ENCODE measurements at regions of chr17 and their contacts with region 1.

Region 1: DNA sequence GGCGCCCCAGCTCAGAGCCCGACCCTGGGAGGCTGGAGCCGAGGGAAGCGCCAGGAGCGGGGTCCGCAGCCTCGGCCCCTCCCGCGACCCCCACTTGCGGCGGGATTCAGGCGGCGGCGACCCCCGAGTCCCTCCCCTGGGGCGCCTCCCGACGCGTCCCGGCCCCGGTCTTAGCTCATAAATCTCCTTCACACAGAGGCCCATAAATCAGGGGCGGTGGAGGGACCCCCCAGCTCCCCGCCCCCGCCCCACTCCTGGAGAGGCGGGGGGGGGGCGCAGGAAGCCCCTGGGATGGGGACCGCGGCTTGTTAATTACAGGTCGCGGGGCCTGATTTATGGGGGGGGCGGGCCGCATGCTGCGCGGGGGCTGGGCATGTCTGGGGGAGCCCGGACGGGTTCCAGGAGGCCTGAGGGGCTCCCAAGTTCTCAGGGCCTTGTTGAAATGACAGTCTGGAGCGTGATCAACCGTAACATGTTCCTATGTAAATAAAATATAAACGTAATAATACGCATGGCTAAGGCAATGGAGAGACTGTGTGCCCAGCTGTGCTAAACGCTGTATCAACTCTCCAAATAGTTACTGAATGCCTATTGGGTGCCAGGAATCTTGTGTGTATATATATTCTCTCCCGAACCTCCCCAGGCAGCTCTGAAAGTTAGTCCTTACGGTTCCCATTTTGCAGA is 10.0 kb upstream of the BHLHA9 start:
- DNase-seq: no peak
- H3K4me3 ChIP-seq: peak overlapping the region; percentile 62
- H3K27ac ChIP-seq: no peak overlapping the region
- H3K4me1 ChIP-seq: peaks cover 3% of the 10 kb centered on the region
- H3K27me3 ChIP-seq: no peaks in the 10 kb centered on the region
- CTCF ChIP-seq: no peak

Region 2: DNA sequence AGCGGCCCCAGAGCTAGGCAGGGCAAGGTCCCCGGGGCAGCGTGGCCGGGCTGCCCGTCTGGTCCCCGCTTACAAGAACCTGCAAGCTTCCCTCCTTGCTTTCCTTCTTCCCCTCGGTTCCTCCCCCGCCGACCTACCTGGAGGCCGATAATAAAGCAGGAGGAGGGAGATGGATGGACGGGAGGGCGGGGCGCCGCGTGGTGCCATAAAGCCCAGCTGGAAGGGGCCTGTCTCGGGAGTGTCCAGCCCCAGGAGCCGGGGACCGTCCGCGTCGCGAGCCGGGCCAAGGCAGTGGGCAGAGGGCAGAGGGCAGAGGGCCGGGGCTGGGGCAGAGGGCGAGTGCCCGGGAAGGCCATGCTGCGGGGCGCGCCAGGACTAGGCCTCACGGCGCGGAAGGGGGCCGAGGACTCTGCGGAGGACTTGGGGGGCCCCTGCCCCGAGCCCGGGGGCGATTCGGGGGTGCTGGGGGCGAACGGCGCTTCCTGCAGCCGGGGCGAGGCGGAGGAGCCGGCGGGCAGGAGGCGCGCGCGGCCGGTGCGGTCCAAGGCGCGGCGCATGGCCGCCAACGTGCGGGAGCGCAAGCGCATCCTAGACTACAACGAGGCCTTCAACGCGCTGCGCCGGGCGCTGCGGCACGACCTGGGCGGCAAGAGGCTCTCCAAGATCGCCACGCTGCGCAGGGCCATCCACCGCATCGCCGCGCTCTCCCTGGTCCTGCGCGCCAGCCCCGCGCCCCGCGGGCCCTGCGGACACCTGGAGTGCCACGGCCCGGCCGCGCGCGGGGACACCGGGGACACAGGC is 10.2 kb after region 1 on chr17 and contains the start of gene BHLHA9:
- CTCF ChIA-PET with region 1: no interaction called
- POLR2A ChIA-PET with region 1: interaction called, 11 read pairs
- intact Hi-C with region 1: no loop called
- DNase-seq: no peak
- H3K4me3 ChIP-seq: no peak within 1 kb of the TSS
- H3K27ac ChIP-seq: no peak within 1 kb of the TSS
- H3K4me1 ChIP-seq: peaks cover 10% of the 10 kb centered on the region
- H3K27me3 ChIP-seq: peaks cover 9% of the 10 kb centered on the region
- CTCF ChIP-seq: no peak
- total RNA-seq, gene BHLHA9: not detected in 2 replicates